ENCODE measurements at regions of chr6 and their contacts with region 1.

Region 1: GRCh38 chr6:132279592-132280139 is 121.6 kb downstream of the MOXD1 start:
- DNase-seq: peak; percentile 34
- H3K4me3 ChIP-seq: peak overlapping the region; percentile 49
- H3K27me3 ChIP-seq: no peaks in the 10 kb centered on the region
- CTCF ChIP-seq: peak; percentile 74

Region 2: DNA sequence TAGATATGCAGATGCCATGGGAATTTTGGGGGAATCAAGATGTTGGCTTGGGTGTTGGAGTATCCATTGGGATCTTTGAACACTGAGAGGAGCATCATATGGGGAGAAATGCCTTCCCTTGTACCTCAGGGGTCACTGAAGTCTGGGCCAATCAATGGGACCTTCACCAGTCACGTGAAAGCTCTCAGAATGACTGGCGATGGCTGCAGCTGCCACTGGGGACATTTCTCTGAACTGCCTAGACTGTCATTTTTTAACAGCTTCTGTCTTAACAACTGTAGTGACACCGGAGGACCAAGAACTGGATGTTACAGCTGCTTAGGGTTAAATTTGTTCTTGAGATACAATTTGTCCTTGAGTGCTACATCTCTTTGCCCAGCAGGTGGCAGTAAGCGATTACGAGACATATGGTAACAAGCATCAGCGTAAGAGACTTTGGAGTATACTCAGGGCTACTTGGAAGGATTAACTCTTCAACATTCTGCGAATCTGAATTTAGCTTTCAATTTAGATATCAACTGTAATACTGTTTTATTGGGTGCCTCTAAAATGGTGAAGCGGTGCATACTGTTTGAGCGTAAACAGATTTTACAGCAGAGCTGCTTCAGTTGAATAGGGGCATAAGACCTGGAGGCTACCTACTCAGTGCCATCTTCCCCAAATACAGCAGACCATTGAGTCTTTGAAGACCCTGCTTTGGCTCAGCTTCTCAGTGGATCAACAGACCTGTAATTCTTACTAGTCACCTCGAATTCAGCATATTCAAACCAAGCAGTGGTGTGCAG is 364.5 kb before region 1 on chr6:
- CTCF ChIA-PET with region 1: interaction called, 28 read pairs
- POLR2A ChIA-PET with region 1: no interaction called
- DNase-seq: no peak
- H3K4me3 ChIP-seq: no peak overlapping the region
- H3K27me3 ChIP-seq: no peaks in the 10 kb centered on the region
- CTCF ChIP-seq: peak; percentile 86

Region 3: DNA sequence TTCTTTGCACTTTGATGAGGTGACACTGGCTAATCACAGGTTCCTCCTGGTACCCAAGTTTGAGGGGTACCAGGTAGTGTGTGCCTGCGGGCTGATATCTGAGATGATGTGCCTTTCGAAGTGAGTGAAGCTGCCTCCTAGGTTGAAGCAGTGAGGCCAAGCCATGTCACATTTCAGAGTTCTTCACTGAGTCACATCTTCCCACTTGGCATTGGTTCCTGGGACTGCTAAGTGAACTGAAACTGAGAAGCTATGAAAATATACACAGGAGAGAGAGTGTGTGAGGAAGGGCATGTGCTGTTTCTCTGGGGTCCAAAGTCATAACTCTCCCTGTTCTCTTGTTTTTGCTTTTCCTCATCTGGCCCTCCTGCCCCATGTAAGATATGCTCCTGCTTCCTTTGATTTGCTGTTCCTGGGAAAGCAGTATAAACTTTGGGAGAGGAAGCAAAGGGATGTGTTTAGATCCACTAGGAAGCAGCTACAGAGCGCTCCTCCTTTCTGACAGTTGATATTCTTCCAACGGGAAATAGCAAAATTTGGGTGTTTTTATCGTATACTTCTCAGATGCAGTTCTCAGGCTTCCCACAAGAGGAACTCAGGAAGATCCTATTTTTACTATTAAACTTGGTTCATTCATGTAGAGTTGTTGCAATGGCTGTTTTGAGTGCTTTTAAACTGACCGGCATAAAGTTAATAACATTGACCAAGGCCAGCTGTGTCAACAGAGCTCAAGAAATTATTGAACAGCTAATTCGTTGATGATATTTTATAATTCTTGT is 32.1 kb before region 1 on chr6:
- CTCF ChIA-PET with region 1: interaction called, 10 read pairs
- POLR2A ChIA-PET with region 1: no interaction called
- DNase-seq: no peak
- H3K4me3 ChIP-seq: no peak overlapping the region
- H3K27me3 ChIP-seq: no peaks in the 10 kb centered on the region
- CTCF ChIP-seq: peak; percentile 28; the same call in 1 of the 2 replicates

Region 4: GRCh38 chr6:132300323-132300949 is 20.8 kb after region 1 on chr6:
- CTCF ChIA-PET with region 1: interaction called, 171 read pairs
- POLR2A ChIA-PET with region 1: no interaction called
- DNase-seq: no peak
- H3K4me3 ChIP-seq: no peak overlapping the region
- H3K27me3 ChIP-seq: no peaks in the 10 kb centered on the region
- CTCF ChIP-seq: peak; percentile 61

Region 5: GRCh38 chr6:132456700-132457143 is 177.1 kb after region 1 on chr6:
- CTCF ChIA-PET with region 1: interaction called, 12 read pairs
- POLR2A ChIA-PET with region 1: no interaction called
- DNase-seq: no peak
- H3K4me3 ChIP-seq: no peak overlapping the region
- H3K27me3 ChIP-seq: no peaks in the 10 kb centered on the region
- CTCF ChIP-seq: 0 out of 2 replicates have a peak, but pooled peaks have one; percentile 19

Region 6: DNA sequence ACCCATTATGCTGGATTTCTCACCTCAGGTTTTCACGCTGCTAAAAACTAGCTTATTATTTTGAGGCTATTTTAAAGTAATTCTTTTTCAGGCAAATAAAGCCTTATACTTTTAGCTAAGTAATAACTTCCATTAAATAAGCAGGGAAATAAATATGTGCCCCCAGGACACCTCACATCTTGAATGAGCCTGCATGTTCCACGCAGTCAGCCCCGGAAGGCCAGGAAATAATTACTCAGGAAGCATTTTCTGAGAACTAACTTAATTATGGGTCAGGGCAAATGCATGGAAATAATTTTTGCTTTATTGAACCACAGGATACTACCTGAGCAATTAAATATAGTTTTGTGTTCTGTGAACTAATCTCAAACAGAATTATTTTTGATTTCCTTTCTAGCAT is 192.1 kb after region 1 on chr6:
- CTCF ChIA-PET with region 1: interaction called, 19 read pairs
- POLR2A ChIA-PET with region 1: no interaction called
- DNase-seq: no peak
- H3K4me3 ChIP-seq: no peak overlapping the region
- H3K27me3 ChIP-seq: no peaks in the 10 kb centered on the region
- CTCF ChIP-seq: no peak

Region 7: GRCh38 chr6:132490024-132490423 is 210.4 kb after region 1 on chr6:
- CTCF ChIA-PET with region 1: interaction called, 159 read pairs
- POLR2A ChIA-PET with region 1: no interaction called
- DNase-seq: peak; percentile 12
- H3K4me3 ChIP-seq: no peak overlapping the region
- H3K27me3 ChIP-seq: no peaks in the 10 kb centered on the region
- CTCF ChIP-seq: no peak

Measured in BJ (cell line).